A549 (cell line): ENCODE measurements at regions of chr2 and their contacts with region 1.

Region 1: DNA sequence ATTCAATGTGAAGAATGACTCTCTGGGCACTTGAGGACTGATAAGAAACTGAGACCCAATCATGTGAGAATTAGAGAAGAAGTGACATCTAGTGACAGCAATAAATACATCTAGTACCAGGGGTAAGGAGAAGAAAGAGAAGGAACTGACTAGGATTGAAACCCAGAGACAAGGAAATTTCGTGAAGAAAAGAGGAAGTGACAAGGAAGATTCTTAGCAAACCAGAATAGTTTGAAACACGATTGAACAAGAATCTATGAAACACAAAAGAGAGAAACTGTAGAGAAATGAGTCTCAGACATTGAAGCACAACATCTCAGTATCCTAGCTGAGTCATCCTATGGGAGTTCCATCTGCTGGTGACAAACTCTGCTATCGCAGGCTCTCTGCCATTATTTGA is 571.9 kb upstream of the PKDCC start:
- DNase-seq: no peak
- ATAC-seq: no peak
- H3K4me3 ChIP-seq: no peak overlapping the region
- H3K27ac ChIP-seq: no peak overlapping the region
- H3K4me1 ChIP-seq: no peaks in the 10 kb centered on the region
- CTCF ChIP-seq: no peak
- EP300 ChIP-seq: no peak
- POLR2A ChIP-seq: no peak
- RAD21 ChIP-seq: no peak

Region 2: GRCh38 chr2:41410011-41410410 is 65.9 kb before region 1 on chr2:
- CTCF ChIA-PET with region 1: no interaction called
- POLR2A ChIA-PET with region 1: no interaction called
- DNase-seq: no peak
- ATAC-seq: no peak
- H3K4me3 ChIP-seq: no peak overlapping the region
- H3K27ac ChIP-seq: no peak overlapping the region
- H3K4me1 ChIP-seq: no peaks in the 10 kb centered on the region
- CTCF ChIP-seq: no peak
- EP300 ChIP-seq: no peak
- POLR2A ChIP-seq: no peak
- RAD21 ChIP-seq: no peak

Region 3: GRCh38 chr2:41464395-41464794 is 11.6 kb before region 1 on chr2:
- CTCF ChIA-PET with region 1: interaction called, 12 read pairs
- POLR2A ChIA-PET with region 1: no interaction called
- DNase-seq: no peak
- ATAC-seq: peak; percentile 40 to 64; a peak in 1 of 6 replicates
- H3K4me3 ChIP-seq: no peak overlapping the region
- H3K27ac ChIP-seq: no peak overlapping the region
- H3K4me1 ChIP-seq: no peaks in the 10 kb centered on the region
- CTCF ChIP-seq: no peak
- EP300 ChIP-seq: no peak
- POLR2A ChIP-seq: no peak
- RAD21 ChIP-seq: no peak

Region 4: GRCh38 chr2:41579806-41580205 is 103.8 kb after region 1 on chr2:
- CTCF ChIA-PET with region 1: no interaction called
- POLR2A ChIA-PET with region 1: no interaction called
- DNase-seq: no peak
- ATAC-seq: no peak
- H3K4me3 ChIP-seq: no peak overlapping the region
- H3K27ac ChIP-seq: no peak overlapping the region
- H3K4me1 ChIP-seq: no peaks in the 10 kb centered on the region
- CTCF ChIP-seq: no peak
- EP300 ChIP-seq: no peak
- POLR2A ChIP-seq: no peak
- RAD21 ChIP-seq: no peak